Endothelial cell of umbilical vein (primary cell): ENCODE measurements at regions of chr6 and their contacts with region 1.

Region 1: GRCh38 chr6:53300656-53301551 is 47.8 kb downstream of the ELOVL5 start:
- DNase-seq: peak; percentile 53
- H3K4me3 ChIP-seq: no peak overlapping the region
- H3K27ac ChIP-seq: peak overlapping the region; percentile 99
- H3K4me1 ChIP-seq: peaks cover 58% of the 10 kb centered on the region
- H3K27me3 ChIP-seq: no peaks in the 10 kb centered on the region
- CTCF ChIP-seq: no peak
- POLR2A ChIP-seq: no peak

Region 2: DNA sequence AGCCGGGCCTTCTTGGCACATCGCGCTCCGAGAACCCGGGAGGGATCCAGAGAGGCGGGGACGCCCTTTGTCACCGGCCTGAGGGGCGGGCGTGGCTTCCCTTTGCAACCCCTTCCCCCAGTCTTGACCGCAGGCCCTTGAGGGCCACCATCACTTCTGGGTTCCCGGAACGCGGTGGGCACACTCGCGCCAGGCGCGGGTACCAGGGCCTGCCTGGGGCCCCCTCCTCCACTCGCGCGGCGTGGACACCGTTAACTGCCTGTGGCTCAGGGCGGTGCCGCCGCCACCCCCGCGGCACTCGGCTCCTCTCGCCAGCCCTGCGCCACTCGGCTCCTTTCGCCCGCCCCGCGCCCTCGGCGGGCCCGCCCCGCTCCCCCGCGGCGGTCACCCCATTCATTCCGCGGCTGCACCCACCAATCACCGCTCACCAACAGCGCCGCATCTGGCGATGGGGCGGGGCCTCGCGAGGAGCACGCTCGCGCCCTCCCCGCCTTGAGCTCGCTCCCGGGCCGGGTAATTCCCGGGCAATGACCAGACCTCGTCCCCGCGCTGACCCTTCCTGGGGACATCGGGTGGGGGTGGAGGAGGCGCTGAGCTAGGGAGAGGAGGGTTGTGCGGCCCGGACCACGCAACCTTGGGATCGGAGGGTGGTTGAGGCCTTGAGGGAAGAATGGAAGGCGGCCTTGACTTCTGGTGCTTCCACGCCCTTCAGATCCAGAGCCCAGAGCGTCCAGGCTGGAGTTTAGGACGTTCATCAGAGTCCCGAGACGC is 58.4 kb after region 1 on chr6:
- CTCF ChIA-PET with region 1: interaction called, 9 read pairs
- POLR2A ChIA-PET with region 1: interaction called, 9 read pairs
- dilution Hi-C with region 1: no loop called
- intact Hi-C with region 1: loop called (anchors 1 kb)
- DNase-seq: peak; percentile 97
- H3K4me3 ChIP-seq: peak overlapping the region in 2 of 3 experiments; percentile 46 to 63
- H3K27ac ChIP-seq: peak overlapping the region; percentile 78
- H3K4me1 ChIP-seq: peaks cover 31% of the 10 kb centered on the region
- H3K27me3 ChIP-seq: peaks cover 0 to 3% of the 10 kb centered on the region in 2 experiments
- CTCF ChIP-seq: no peak
- POLR2A ChIP-seq: peak; percentile 46

Region 3: GRCh38 chr6:53603386-53604116 is 302.6 kb after region 1 on chr6:
- CTCF ChIA-PET with region 1: no interaction called
- POLR2A ChIA-PET with region 1: no interaction called
- dilution Hi-C with region 1: no loop called
- intact Hi-C with region 1: no loop called
- DNase-seq: no peak
- H3K4me3 ChIP-seq: no peak overlapping the region
- H3K27ac ChIP-seq: no peak overlapping the region
- H3K4me1 ChIP-seq: no peaks in the 10 kb centered on the region
- H3K27me3 ChIP-seq: no peaks in the 10 kb centered on the region
- CTCF ChIP-seq: no peak
- POLR2A ChIP-seq: no peak

Region 4: DNA sequence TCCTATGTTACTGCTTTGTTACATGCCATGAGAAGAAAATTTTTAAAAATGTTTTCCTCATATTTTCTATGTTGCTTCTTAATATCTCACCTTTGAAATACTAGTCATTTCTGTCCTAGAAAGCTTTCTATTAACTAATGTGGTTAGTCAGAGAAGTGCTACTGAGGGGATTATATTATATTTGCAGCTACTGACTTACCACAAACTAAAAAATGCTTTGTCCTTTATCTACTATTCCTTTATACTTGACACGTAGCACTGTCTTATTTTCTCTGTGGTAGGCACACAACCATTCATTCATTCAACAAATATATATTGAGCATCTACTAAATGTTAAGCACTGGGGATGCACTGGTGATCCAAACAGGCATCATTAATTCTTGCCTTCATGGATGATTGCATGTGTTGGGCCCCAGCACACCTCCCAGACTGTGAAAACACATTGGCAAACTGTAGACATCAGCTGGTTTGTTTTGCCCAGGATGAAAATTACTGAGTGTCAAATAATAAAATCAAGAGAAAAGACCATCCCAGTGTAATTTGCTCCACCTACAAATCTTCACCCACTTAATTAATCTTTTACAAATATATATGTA is 799.6 kb after region 1 on chr6:
- CTCF ChIA-PET with region 1: no interaction called
- POLR2A ChIA-PET with region 1: no interaction called
- dilution Hi-C with region 1: no loop called
- intact Hi-C with region 1: no loop called
- DNase-seq: no peak
- H3K4me3 ChIP-seq: no peak overlapping the region
- H3K27ac ChIP-seq: no peak overlapping the region
- H3K4me1 ChIP-seq: no peaks in the 10 kb centered on the region
- H3K27me3 ChIP-seq: no peaks in the 10 kb centered on the region
- CTCF ChIP-seq: no peak
- POLR2A ChIP-seq: no peak